ENCODE measurements at regions of chr1 and their contacts with region 1.

Region 1: DNA sequence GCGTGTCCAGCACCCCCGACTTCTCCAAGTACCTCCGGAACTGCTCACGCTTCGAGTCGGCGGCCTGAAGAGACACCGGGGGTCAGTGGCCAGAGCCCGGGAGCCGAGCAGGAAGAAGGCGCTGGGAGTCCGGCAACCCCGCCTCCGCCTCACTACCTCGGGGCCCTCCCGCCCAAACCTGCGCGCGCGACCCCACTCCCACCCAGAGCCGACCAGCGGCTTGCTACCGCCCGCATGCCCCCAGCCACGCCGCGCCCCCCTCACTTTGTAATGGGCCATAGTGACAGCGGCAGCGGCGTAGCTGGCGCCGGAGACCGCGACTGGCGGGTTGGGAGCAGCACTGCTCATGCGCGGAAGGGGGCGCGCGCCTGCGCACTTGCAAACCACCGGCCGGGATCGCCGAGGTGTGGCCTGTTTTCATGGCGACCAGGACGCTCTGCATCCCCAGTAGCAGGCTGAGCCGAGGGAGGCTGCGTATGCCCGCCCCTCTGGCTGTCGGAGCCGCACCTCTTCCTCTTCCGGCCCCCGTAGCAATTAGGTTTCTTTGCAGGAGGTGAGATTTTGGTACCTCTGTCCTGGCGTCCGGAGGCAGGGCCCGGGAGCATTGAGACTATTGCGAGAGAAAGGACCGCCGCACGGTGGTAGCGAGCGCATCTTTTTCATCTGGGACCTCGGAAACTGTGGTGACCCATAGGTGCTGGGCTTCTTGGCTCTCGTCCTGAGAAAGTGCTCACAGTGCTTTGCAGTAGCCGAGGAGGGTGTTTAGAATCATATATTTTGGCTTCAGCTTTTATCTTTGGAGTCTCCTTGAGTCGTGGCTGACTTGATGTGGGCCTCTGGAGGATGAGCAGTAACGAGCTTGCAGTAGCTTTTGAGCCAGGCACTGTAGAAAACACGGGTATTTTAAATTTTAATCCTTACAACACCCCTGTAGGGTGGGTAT is at the start of gene MYCBP:
- DNase-seq: peak; percentile 98
- ATAC-seq: peak; percentile 99
- H3K4me3 Mint-ChIP-seq: peak within 1 kb of the TSS; percentile 91
- H3K27ac Mint-ChIP-seq: peak within 1 kb of the TSS; percentile 75
- H3K4me1 Mint-ChIP-seq: peaks cover 21% of the 10 kb centered on the region
- H3K27me3 Mint-ChIP-seq: no peaks in the 10 kb centered on the region
- total RNA-seq, gene MYCBP: 30.4 to 34.3 TPM

Region 2: DNA sequence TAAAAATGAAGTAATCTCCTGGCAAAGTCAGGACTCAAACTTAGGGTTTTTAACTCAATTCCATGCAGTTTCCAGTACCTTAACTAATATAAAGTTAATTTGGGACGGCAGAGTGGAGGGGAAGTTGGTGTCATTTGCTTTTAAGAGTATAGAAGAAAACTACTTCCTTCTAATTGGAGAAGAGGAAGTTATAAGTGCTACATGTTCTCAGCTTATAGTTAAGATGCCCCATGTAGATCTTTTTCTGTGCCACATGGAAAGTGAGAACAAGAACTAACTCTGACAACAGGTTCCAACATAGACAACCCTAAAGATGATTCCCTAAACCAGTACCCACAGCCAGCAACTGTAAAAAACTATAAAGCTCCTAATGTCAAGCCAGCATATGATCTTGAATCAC is 25.2 kb before region 1 on chr1:
- POLR2A ChIA-PET with region 1: no interaction called
- DNase-seq: no peak
- ATAC-seq: no peak
- H3K4me3 Mint-ChIP-seq: no peak overlapping the region
- H3K27ac Mint-ChIP-seq: no peak overlapping the region
- H3K4me1 Mint-ChIP-seq: peaks cover 4% of the 10 kb centered on the region
- H3K27me3 Mint-ChIP-seq: no peaks in the 10 kb centered on the region

Region 3: DNA sequence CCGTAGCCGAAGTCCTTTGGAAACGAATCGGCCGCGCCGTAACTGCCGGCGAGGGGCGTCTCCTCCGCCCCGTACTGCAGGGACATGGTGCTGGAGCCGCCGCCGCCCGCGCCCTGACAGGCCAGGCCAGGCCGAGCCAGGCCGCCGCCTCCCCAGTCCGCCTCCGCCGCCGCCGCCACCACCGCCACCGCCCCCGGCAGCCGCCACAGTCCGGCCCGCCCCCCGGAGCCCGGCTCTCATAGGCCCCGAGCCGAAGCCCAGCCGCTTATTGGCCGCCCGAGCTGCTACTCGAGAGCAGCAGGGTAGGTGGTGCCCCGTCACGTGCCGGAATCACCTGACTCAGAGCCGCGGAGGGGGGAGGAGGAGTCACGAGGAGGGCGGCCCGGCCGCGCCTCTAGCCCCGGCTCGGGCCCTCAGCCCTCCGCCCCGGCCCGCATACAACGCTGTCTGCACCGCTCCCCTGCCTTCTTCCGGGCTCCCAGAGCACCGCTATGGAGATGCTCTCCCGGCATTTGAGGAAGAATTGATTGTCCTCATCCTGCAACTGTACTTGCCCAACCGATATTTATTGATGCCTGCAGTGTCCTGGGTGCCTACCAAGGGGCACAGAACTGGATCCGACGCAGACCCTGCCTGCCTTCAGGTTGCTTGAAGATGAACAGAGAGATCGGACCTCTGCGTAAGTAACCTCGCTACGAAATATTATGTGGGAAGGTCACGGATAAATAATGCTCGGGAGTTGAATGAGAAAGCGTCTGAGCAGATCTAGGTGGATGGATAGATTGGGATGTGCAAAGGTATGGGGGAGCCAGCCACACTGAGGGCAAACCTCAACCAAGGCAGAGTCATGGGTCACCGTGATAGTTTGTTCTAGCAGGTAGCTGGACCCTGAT is 13.5 kb before region 1 on chr1 and contains the start of gene RRAGC:
- POLR2A ChIA-PET with region 1: interaction called, 19 read pairs
- DNase-seq: peak; percentile 98
- ATAC-seq: peak; percentile 99
- H3K4me3 Mint-ChIP-seq: peak within 1 kb of the TSS; percentile 92
- H3K27ac Mint-ChIP-seq: peak within 1 kb of the TSS; percentile 77
- H3K4me1 Mint-ChIP-seq: peaks cover 22% of the 10 kb centered on the region
- H3K27me3 Mint-ChIP-seq: no peaks in the 10 kb centered on the region
- total RNA-seq, gene RRAGC: 15.8 to 16.3 TPM

Region 4: DNA sequence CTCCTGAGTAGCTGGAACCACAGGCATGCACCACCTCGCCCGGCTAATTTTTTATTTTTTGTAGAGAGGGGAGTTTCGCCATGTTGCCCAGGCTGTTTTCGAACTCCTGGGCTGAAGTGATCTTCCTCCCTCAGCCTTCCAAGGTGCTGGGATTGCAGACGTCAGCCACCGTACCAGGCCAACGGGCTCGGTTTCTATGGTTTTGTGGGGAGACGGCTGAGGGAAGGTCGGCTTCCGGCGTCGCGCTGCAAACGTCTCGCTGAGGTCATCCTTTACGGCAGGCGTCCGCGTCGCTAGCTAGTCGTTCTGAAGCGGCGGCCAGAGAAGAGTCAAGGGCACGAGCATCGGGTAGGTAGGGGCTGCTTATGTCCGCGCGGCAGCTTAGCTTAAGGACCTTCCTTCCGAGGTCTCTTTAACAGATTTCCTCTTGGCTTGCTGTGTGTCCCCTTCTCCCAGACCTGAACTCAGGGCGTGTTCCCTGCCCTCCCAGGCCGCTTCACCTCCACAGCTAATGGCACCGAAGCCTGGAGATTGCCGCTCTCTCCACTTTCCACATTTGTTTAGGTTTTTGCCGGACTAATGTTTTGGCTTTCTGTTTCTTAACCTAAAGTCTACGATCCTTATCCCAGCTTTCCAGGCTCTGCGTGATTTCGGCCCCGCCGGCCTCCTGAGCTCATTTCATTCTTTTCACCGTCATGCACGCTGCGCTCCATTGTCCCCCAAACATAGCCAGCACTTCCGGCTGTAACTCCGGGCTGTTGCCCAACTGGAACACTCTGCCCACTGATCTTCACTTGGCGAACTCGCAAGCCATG is 153.0 kb after region 1 on chr1 and contains the start of gene NDUFS5:
- POLR2A ChIA-PET with region 1: interaction called, 12 read pairs
- DNase-seq: peak; percentile 81
- ATAC-seq: peak; percentile 88
- H3K4me3 Mint-ChIP-seq: peak within 1 kb of the TSS; percentile 94
- H3K27ac Mint-ChIP-seq: peak within 1 kb of the TSS; percentile 96
- H3K4me1 Mint-ChIP-seq: peaks cover 12% of the 10 kb centered on the region
- H3K27me3 Mint-ChIP-seq: peaks cover 4% of the 10 kb centered on the region
- total RNA-seq, gene NDUFS5: 107 to 113 TPM